ENCODE measurements at regions of chr2 and their contacts with region 1.

Region 1: DNA sequence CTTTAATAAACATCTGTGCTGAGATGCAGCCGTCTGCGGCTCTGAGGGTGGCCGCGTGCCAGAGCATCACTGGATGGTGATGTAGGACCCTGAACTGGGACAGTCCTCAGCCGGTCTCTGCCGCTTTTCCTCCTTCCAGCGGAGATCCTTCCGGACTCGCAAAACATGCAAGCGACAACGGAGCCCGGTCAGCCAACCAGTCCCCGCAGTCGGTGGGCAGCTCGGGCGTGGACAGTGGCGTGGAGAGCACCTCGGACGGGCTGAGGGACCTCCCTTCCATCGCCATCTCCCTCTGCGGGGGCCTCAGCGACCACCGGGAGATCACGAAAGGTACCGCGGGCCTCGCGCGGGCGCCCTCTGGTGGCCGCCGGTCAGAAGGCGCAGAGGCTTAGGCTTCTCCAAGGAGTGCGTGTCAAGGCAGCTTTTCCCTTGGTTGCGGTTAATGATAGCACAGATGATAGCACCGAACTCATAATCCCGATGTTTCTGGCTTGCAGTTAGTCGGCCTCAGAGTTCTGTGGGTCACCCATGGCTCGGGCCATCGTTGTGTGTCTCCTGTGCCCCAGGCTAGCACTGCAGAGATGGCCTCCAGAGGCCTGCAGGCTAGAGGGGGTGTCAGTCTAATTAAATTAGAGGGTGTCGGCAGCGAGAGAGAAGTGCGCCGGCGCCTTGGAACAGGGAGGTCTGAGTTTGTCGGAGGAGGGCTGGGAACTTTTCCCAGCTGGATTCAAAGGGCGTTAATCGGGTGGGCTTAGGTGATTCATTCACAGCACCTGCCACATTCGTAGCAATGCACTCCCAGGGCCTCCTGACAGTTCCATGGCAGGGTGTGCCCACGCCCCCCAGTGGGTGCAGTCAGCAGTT is 38.5 kb downstream of the LPIN1 start:
- DNase-seq: peak; percentile 14 to 69 (median 35)
- ATAC-seq: peak; percentile 55
- H3K4me3 ChIP-seq: no peak overlapping the region
- H3K4me3 Mint-ChIP-seq: no peak overlapping the region
- H3K27ac ChIP-seq: no peak overlapping the region
- H3K27ac Mint-ChIP-seq: no peak overlapping the region
- H3K4me1 ChIP-seq: peaks cover 2% of the 10 kb centered on the region
- H3K4me1 Mint-ChIP-seq: no peaks in the 10 kb centered on the region
- H3K27me3 ChIP-seq: no peaks in the 10 kb centered on the region
- H3K27me3 Mint-ChIP-seq: no peaks in the 10 kb centered on the region
- CTCF ChIP-seq: peak; percentile 94

Region 2: DNA sequence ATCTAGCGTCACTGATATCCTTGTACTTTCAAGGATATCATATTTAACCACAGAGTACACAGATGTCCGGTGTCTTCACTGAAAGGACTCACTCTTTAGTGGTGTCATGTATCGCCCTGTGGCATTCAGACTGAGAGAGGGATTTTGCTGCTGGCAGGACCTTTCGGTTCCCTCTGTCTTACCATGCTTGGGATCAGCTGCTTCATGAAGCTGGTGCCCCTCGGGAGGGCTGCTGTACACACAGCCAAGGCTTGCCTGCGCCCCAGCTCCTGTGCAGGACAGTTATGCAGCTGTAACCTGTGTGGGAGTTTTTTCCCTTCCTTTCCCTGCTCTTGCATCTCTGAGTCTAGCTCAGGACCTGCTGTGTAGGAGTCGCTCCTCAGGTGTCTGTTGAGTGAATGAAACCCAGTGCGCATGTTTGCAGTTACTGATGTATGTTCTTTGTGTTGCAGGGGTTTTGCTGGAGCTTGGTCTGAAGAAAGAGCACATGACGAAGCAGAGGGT is 186.7 kb before region 1 on chr2:
- CTCF ChIA-PET with region 1: no interaction called
- POLR2A ChIA-PET with region 1: no interaction called
- intact Hi-C with region 1: loop called in 1 of 2 experiments (anchors 10 kb)
- DNase-seq: no peak
- ATAC-seq: no peak
- H3K4me3 ChIP-seq: no peak overlapping the region
- H3K4me3 Mint-ChIP-seq: no peak overlapping the region
- H3K27ac ChIP-seq: no peak overlapping the region
- H3K27ac Mint-ChIP-seq: no peak overlapping the region
- H3K4me1 ChIP-seq: no peaks in the 10 kb centered on the region
- H3K4me1 Mint-ChIP-seq: no peaks in the 10 kb centered on the region
- H3K27me3 ChIP-seq: no peaks in the 10 kb centered on the region
- H3K27me3 Mint-ChIP-seq: no peaks in the 10 kb centered on the region
- CTCF ChIP-seq: no peak

Region 3: DNA sequence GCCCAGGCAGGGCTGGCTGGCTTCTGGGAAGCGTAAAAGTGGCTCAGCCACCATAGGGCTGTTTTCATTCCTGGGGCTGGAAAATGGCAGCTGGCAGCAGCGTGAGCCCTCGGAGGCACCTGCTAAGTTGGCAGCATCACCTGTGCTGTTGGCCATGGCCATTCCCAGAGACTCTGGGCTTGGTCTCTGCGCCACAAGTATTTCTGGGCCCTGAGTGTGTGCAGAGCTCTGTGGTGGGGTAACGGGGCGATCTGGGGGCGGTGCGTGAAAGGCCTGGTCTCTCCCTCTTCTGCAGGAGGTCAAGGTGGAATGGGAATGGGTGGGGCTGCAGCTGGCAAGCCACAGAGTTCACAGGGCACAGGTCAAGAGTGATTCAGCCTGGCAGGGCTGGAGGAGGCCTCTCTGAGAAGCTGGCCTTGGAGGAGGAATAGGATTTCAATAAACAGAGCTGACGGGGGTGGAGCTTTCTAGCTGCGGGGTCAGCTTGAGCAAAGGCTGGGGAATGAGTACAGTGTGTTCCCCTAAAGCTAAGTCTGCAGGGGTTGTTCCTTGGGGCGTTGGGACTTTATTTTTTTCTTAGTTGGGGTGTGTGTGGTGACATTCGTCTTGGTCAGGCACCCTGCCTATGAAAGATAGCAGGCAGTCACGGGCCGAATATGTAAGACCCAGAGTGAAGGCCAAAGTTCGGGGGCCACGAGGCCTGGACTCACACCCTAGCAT is 104.6 kb before region 1 on chr2:
- CTCF ChIA-PET with region 1: no interaction called
- POLR2A ChIA-PET with region 1: no interaction called
- intact Hi-C with region 1: no loop called
- DNase-seq: no peak
- ATAC-seq: no peak
- H3K4me3 ChIP-seq: no peak overlapping the region
- H3K4me3 Mint-ChIP-seq: no peak overlapping the region
- H3K27ac ChIP-seq: no peak overlapping the region
- H3K27ac Mint-ChIP-seq: no peak overlapping the region
- H3K4me1 ChIP-seq: no peaks in the 10 kb centered on the region
- H3K4me1 Mint-ChIP-seq: peaks cover 7% of the 10 kb centered on the region
- H3K27me3 ChIP-seq: peaks cover 6 to 15% of the 10 kb centered on the region in 2 experiments
- H3K27me3 Mint-ChIP-seq: peaks cover 54% of the 10 kb centered on the region
- CTCF ChIP-seq: no peak